PC-3 (cell line): ENCODE measurements at regions of chr2 and their contacts with region 1.

Region 1: GRCh38 chr2:42693013-42693615 is 70.8 kb downstream of the OXER1 start:
- DNase-seq: no peak
- ATAC-seq: no peak
- H3K4me3 ChIP-seq: no peak overlapping the region
- H3K27ac ChIP-seq: no peak overlapping the region
- H3K4me1 ChIP-seq: no peaks in the 10 kb centered on the region
- H3K27me3 ChIP-seq: no peaks in the 10 kb centered on the region
- CTCF ChIP-seq: no peak

Region 2: DNA sequence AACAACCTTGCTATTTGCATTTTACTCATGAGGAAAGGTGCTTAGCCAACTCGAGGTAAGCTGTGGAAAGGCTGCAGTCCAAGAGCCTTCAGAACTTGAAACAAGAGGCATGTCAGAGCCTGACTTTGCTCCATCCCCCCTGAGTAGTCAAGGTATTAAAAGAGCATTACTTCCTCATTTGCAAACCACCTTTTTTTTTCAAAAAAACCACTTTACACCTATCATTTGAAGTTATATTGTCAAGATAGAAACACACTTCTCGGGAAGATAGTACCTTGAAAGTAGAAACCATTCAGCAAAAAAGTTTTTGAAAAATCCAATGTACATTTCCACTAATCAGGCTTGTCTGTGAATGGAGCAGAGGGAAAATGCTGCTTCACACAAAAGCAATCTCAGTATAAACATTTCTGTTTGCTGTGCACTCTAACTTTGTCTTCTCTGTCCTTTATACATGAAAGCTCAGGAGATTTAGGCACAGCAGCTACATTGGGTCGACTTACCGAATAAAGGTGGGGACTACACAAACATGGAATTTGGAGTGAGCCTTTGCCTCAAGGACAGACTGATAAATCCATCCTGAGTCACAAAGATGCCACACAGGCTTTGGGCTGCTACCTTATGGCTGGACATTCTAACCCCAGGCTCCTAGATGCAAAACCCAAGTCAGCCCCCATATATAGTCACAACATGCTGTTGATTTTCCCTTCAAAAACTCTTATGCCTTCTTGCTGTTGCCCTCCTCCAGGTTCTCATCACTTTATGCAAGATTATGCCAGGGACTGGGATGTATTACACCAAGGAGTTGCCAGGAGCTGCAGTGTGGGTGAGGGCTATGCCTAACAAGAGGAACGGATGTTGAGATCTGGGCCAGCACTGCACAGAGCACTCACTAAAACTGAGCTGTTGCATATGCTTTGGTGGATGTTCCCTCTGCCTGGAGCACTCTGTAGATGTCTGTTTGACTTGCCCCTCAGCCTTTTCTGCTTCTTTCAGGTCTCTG is 565.4 kb before region 1 on chr2:
- CTCF ChIA-PET with region 1: no interaction called
- POLR2A ChIA-PET with region 1: no interaction called
- intact Hi-C with region 1: no loop called
- DNase-seq: no peak
- ATAC-seq: no peak
- H3K4me3 ChIP-seq: no peak overlapping the region
- H3K27ac ChIP-seq: no peak overlapping the region
- H3K4me1 ChIP-seq: peaks cover 14% of the 10 kb centered on the region
- H3K27me3 ChIP-seq: no peaks in the 10 kb centered on the region
- CTCF ChIP-seq: no peak

Region 3: GRCh38 chr2:42810121-42810970 is 117.2 kb after region 1 on chr2:
- CTCF ChIA-PET with region 1: interaction called, 17 read pairs
- POLR2A ChIA-PET with region 1: no interaction called
- intact Hi-C with region 1: no loop called
- DNase-seq: peak; percentile 96
- ATAC-seq: peak; percentile 87
- H3K4me3 ChIP-seq: peak overlapping the region; percentile 81
- H3K27ac ChIP-seq: peak overlapping the region; percentile 89
- H3K4me1 ChIP-seq: peaks cover 16% of the 10 kb centered on the region
- H3K27me3 ChIP-seq: no peaks in the 10 kb centered on the region
- CTCF ChIP-seq: no peak